ENCODE measurements at regions of chr5 and their contacts with region 1.

Region 1: GRCh38 chr5:6632917-6633468 is at the starts of genes NSUN2 and SRD5A1:
- DNase-seq: peak; percentile 42
- H3K4me3 ChIP-seq: peak within 1 kb of the TSS; percentile 67
- CTCF ChIP-seq: no peak

Region 2: GRCh38 chr5:6712577-6713275 is 79.7 kb after region 1 on chr5:
- CTCF ChIA-PET with region 1: interaction called, 4 read pairs
- POLR2A ChIA-PET with region 1: interaction called, 14 read pairs
- DNase-seq: peak; percentile 67
- H3K4me3 ChIP-seq: peak overlapping the region; percentile 76
- CTCF ChIP-seq: no peak